ENCODE measurements at regions of chrX and their contacts with region 1.

Region 1: GRCh38 chrX:21479695-21480270 is 105.6 kb downstream of the CNKSR2 start:
- DNase-seq: peak; percentile 16
- CTCF ChIP-seq: peak; percentile 58

Region 2: GRCh38 chrX:20515841-20516461 is 963.8 kb before region 1 on chrX:
- in situ Hi-C with region 1: loop called (anchors 25 kb)
- DNase-seq: peak; percentile 24
- CTCF ChIP-seq: no peak

Region 3: DNA sequence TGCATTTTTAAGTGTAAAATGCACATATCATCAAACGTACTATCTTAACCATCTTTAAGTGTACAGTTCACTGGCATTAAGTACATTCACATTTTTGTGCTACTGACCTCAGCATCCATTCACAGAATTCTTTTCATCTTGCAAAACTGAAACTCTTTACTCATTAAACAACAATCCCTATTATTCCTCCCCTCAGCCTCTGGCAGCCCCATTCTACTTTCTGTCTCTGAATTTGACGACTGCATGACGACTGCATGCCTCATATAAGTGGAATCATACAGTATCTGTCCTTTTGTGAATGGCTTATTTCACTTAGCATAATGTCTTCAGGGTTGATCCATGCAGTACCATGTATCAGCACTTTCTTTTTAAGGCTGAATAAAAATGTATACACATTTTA is 66.9 kb before region 1 on chrX:
- in situ Hi-C with region 1: no loop called
- DNase-seq: no peak
- CTCF ChIP-seq: no peak

Region 4: GRCh38 chrX:21870494-21870893 is 390.7 kb after region 1 on chrX:
- in situ Hi-C with region 1: no loop called
- DNase-seq: no peak
- CTCF ChIP-seq: no peak